ENCODE measurements at regions of chr7 and their contacts with region 1.

Region 1: GRCh38 chr7:2844165-2844898 is at the start of gene GNA12:
- DNase-seq: peak; percentile 98
- ATAC-seq: peak; percentile 96 to 99 (median 98)
- H3K4me3 ChIP-seq: peak within 1 kb of the TSS; percentile 72 to 87 (median 78)
- H3K27ac ChIP-seq: peak within 1 kb of the TSS; percentile 32 to 77 (median 68)
- H3K4me1 ChIP-seq: peaks cover 4 to 49% (median 32%) of the 10 kb centered on the region in 9 donors
- H3K27me3 ChIP-seq: no peaks in the 10 kb centered on the region
- CTCF ChIP-seq: no peak
- total RNA-seq, gene GNA12: 25.0 to 46.4 (median 34.5) TPM

Region 2: GRCh38 chr7:2732959-2733584 is 111.3 kb before region 1 on chr7:
- intact Hi-C with region 1: loop called in 3 of 10 experiments (anchors 5 to 10 kb)
- DNase-seq: peak; percentile 67 to 72
- ATAC-seq: peak; percentile 36 to 81 (median 64)
- H3K4me3 ChIP-seq: no peak overlapping the region
- H3K27ac ChIP-seq: peak overlapping the region in 9 of 10 donors; percentile 23 to 83 (median 59)
- H3K4me1 ChIP-seq: peaks cover 20 to 67% (median 45%) of the 10 kb centered on the region in 9 donors
- H3K27me3 ChIP-seq: no peaks in the 10 kb centered on the region
- CTCF ChIP-seq: peak in 2 of 9 donors; percentile 11 to 27